MCF 10A (cell line): ENCODE measurements at regions of chr17 and their contacts with region 1.

Region 1: DNA sequence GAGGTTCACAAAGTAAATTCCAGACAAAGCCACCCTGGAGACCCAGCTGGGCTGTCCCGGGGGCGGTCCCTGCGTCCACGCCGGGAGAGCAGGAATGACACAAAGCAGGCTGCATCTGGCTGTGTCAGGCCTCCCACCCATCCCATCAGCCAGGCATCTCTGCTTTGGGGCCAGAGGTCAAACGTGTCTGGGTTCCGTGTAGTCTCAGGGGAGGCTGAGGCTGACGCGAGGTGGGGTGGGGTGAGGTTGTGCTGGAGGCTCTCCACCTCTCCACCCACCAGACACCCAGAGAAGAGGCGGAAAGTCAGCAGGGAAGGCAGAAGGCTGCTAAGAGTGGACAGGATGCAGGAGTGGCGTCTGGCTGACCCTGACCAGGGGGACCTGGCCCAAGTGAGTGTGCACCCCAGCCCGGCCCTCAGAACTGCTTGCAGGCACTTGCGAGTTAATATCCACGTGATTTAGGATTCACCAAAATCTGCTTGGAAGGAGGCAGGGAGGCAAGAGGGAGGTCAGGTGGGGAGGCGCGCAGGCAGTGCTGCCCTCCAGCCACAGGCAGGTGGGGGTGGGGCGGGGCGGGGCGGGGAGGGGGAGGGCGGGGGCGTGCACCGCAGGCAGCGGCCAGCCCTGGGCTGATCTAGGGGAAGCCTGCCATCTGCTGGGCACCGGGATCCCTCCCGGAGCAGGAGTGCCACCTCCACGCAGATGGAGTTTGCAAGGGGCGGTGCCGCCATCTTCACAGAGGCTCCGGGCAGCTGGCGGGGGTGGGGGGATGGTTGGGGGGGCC is 44.3 kb downstream of the TBC1D16 start:
- DNase-seq: peak; percentile 75
- H3K4me3 Mint-ChIP-seq: no peak overlapping the region
- H3K27ac Mint-ChIP-seq: no peak overlapping the region
- H3K4me1 Mint-ChIP-seq: peaks cover 35% of the 10 kb centered on the region
- H3K27me3 Mint-ChIP-seq: no peaks in the 10 kb centered on the region
- CTCF ChIP-seq: peak; percentile 73

Region 2: GRCh38 chr17:79645022-79645776 is 346.1 kb before region 1 on chr17:
- CTCF ChIA-PET with region 1: no interaction called
- POLR2A ChIA-PET with region 1: no interaction called
- intact Hi-C with region 1: no loop called
- DNase-seq: no peak
- H3K4me3 Mint-ChIP-seq: no peak overlapping the region
- H3K27ac Mint-ChIP-seq: no peak overlapping the region
- H3K4me1 Mint-ChIP-seq: no peaks in the 10 kb centered on the region
- H3K27me3 Mint-ChIP-seq: peaks cover 75% of the 10 kb centered on the region
- CTCF ChIP-seq: no peak

Region 3: GRCh38 chr17:79796763-79797491 is 194.4 kb before region 1 on chr17 and contains the start of gene CBX8:
- CTCF ChIA-PET with region 1: no interaction called
- POLR2A ChIA-PET with region 1: interaction called, 10 read pairs
- intact Hi-C with region 1: no loop called
- DNase-seq: peak; percentile 99
- H3K4me3 Mint-ChIP-seq: peak within 1 kb of the TSS; percentile 81
- H3K27ac Mint-ChIP-seq: peak within 1 kb of the TSS; percentile 88
- H3K4me1 Mint-ChIP-seq: peaks cover 15% of the 10 kb centered on the region
- H3K27me3 Mint-ChIP-seq: peaks cover 26% of the 10 kb centered on the region
- CTCF ChIP-seq: no peak
- total RNA-seq, gene CBX8: 9.4 and 10.5 TPM in 2 replicates

Region 4: DNA sequence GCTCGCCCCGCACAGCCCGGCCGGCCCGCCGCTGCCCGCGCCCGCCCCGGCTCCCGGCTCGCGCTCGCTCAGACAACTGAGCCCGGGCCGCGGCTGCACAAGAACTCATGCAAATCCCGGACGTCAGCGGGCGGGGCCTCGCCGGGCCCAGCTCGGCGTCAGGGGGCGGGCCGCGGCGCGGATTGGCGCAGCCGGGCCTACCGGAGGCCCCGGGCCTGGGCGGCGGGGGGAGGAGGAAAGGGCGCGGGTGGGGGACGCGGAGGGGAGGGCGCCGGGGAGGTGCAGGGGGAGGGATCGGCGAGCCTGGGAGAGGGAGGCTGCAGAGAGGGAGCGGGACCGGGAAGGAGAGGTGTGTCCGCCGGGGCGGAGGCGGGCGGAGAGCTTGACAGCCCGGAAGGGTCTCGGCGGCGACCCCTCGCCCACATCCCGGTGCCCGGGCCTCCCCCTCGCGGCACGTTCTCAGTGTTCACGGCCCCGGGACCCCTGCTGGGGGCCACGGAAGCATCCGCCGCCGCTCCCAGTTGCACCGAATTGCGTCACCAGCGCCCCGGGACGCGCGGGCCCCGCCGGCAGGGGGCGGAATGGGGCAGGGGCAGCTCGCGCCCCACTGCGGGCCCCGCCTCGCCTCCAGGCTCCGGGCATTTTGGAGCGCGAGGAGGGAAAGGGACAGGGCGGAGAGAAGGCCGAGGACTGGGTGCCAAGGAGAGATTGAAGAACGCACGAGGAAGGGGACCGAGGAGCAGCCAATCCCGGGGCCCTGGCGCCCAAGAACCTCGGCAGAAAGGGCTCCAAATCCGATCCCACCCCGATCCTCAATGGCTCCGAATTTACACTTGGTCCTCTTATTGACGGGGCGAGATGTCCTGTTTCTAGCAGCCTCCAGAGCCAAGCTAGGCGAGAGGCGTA is 151.7 kb before region 1 on chr17 and contains the start of gene CBX4:
- CTCF ChIA-PET with region 1: interaction called, 8 read pairs
- POLR2A ChIA-PET with region 1: interaction called, 15 read pairs
- intact Hi-C with region 1: loop called (anchors 1 kb)
- DNase-seq: peak; percentile 95
- H3K4me3 Mint-ChIP-seq: peak within 1 kb of the TSS; percentile 90
- H3K27ac Mint-ChIP-seq: peak within 1 kb of the TSS; percentile 93
- H3K4me1 Mint-ChIP-seq: peaks cover 5% of the 10 kb centered on the region
- H3K27me3 Mint-ChIP-seq: peaks cover 11% of the 10 kb centered on the region
- CTCF ChIP-seq: peak; percentile 92
- total RNA-seq, gene CBX4: 85.8 and 89.7 TPM in 2 replicates

Region 5: GRCh38 chr17:79933863-79934652 is 57.3 kb before region 1 on chr17:
- CTCF ChIA-PET with region 1: interaction called, 4 read pairs
- POLR2A ChIA-PET with region 1: interaction called, 5 read pairs
- intact Hi-C with region 1: loop called (anchors 5 kb)
- DNase-seq: peak; percentile 70
- H3K4me3 Mint-ChIP-seq: no peak overlapping the region
- H3K27ac Mint-ChIP-seq: no peak overlapping the region
- H3K4me1 Mint-ChIP-seq: peaks cover 18% of the 10 kb centered on the region
- H3K27me3 Mint-ChIP-seq: no peaks in the 10 kb centered on the region
- CTCF ChIP-seq: no peak

Region 6: GRCh38 chr17:80008383-80008840 is 17.1 kb after region 1 on chr17:
- CTCF ChIA-PET with region 1: interaction called, 49 read pairs
- POLR2A ChIA-PET with region 1: interaction called, 5 read pairs
- intact Hi-C with region 1: no loop called
- DNase-seq: peak; percentile 81
- H3K4me3 Mint-ChIP-seq: no peak overlapping the region
- H3K27ac Mint-ChIP-seq: no peak overlapping the region
- H3K4me1 Mint-ChIP-seq: peaks cover 7% of the 10 kb centered on the region
- H3K27me3 Mint-ChIP-seq: no peaks in the 10 kb centered on the region
- CTCF ChIP-seq: peak; percentile 93

Region 7: DNA sequence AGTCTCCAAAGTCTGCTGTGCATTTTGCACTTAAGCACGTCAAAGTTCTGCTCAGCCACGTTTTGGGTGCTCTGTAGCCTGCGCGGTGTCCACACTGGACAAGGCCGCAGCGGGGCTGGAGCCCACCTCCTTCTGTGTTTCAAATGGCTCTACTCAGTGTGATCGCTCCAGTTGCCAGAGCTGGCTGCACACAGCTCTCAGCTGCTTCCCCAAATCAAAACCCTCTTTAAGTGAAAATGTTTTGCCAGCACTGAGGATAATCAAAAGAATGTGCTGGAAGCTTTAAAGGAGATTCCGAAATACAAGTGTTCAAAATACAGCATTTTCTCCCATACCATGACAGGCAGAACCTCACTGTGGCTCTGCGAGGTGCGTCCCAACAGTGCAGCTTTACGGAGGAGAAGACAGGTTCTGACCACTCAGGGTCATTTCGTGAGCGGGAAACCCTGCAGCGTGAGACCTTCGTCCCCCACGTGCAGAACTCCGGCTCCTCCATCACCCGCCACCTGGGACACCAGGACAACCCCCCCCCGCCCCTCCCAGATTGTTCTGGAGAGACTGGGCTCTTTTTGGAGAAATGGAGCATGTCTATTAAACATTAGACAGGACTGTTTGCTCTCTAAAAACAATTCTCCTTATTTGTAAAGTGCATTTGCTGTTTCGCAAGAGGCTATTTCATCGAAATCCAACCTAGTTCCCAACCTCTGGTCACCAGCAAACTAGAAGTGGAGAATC is 27.8 kb after region 1 on chr17:
- CTCF ChIA-PET with region 1: no interaction called
- POLR2A ChIA-PET with region 1: no interaction called
- intact Hi-C with region 1: no loop called
- DNase-seq: no peak
- H3K4me3 Mint-ChIP-seq: no peak overlapping the region
- H3K27ac Mint-ChIP-seq: no peak overlapping the region
- H3K4me1 Mint-ChIP-seq: no peaks in the 10 kb centered on the region
- H3K27me3 Mint-ChIP-seq: no peaks in the 10 kb centered on the region
- CTCF ChIP-seq: no peak